OCI-LY7 (cell line): ENCODE measurements at regions of chr18 and their contacts with region 1.

Region 1: GRCh38 chr18:66599190-66599589 is 4.7 kb downstream of the CDH19 start:
- DNase-seq: no peak
- H3K4me3 ChIP-seq: no peak overlapping the region
- H3K27ac ChIP-seq: no peak overlapping the region
- H3K4me1 ChIP-seq: no peaks in the 10 kb centered on the region
- CTCF ChIP-seq: no peak

Region 2: GRCh38 chr18:66252703-66253102 is 346.5 kb before region 1 on chr18:
- CTCF ChIA-PET with region 1: no interaction called
- POLR2A ChIA-PET with region 1: interaction called, 10 read pairs
- intact Hi-C with region 1: no loop called
- DNase-seq: no peak
- H3K4me3 ChIP-seq: no peak overlapping the region
- H3K27ac ChIP-seq: no peak overlapping the region
- H3K4me1 ChIP-seq: no peaks in the 10 kb centered on the region
- CTCF ChIP-seq: no peak

Region 3: DNA sequence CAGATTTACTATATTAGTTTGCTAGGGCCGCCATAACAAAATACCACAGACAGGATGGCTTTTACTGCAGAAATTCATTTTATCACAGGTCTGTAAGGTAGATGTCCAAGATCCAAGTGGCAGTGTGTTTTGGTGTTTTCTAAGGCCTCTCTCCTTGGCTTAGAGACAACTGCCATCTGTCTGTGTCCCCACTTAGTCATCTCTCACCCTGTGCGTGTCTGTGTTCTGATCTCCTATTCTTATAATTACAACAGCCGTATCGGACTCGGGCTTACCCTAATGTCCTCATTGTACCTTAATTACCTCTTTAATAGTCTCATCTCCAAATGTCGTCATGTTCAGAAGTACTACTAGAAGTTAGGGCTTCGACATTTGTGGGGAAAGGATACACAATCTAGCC is 367.0 kb after region 1 on chr18:
- CTCF ChIA-PET with region 1: no interaction called
- POLR2A ChIA-PET with region 1: no interaction called
- intact Hi-C with region 1: no loop called
- DNase-seq: no peak
- H3K4me3 ChIP-seq: no peak overlapping the region
- H3K27ac ChIP-seq: no peak overlapping the region
- H3K4me1 ChIP-seq: no peaks in the 10 kb centered on the region
- CTCF ChIP-seq: no peak